Endothelial cell of umbilical vein (primary cell): ENCODE measurements at regions of chr5 and their contacts with region 1.

Region 1: GRCh38 chr5:129767906-129768380 is 20.0 kb downstream of the MINAR2 start:
- DNase-seq: peak; percentile 87
- H3K4me3 ChIP-seq: no peak overlapping the region
- H3K27ac ChIP-seq: no peak overlapping the region
- H3K4me1 ChIP-seq: no peaks in the 10 kb centered on the region
- H3K27me3 ChIP-seq: peaks cover 1 to 5% of the 10 kb centered on the region in 2 experiments
- CTCF ChIP-seq: peak; percentile 86 to 96
- POLR2A ChIP-seq: no peak

Region 2: GRCh38 chr5:129113871-129114270 is 654.1 kb before region 1 on chr5:
- CTCF ChIA-PET with region 1: interaction called, 4 read pairs
- POLR2A ChIA-PET with region 1: no interaction called
- dilution Hi-C with region 1: no loop called
- intact Hi-C with region 1: loop called (anchors 5 kb)
- DNase-seq: no peak
- H3K4me3 ChIP-seq: no peak overlapping the region
- H3K27ac ChIP-seq: no peak overlapping the region
- H3K4me1 ChIP-seq: no peaks in the 10 kb centered on the region
- H3K27me3 ChIP-seq: no peaks in the 10 kb centered on the region
- CTCF ChIP-seq: no peak
- POLR2A ChIP-seq: no peak

Region 3: DNA sequence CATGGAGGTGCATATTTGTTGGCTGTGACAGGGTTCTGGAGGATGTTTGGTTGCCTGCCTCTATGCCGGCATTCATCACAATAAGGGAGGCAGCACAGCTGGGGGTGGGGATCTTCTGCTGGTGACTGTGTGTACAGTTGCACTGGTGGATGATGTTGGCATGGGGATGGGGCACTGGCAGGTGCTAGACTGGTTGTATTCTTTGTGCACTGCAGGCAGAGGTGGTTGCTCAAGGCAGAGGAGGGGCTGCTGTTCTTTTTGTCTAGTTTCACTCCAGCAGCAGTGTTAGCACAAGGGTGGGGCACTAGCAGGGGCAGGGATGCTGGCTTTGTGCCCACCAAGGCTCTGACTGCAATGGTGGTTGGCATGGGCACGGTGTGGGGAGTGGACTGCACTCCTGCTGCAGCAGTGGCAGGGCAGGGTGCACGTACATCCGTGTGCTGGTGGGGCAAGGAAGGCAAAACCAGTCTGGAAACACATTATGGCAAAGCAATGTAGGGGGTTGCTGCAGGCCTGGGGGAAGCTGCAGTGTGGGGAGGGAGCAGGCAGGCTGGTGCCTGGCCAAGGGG is 604.0 kb before region 1 on chr5:
- CTCF ChIA-PET with region 1: no interaction called
- POLR2A ChIA-PET with region 1: no interaction called
- dilution Hi-C with region 1: no loop called
- intact Hi-C with region 1: no loop called
- DNase-seq: no peak
- H3K4me3 ChIP-seq: no peak overlapping the region
- H3K27ac ChIP-seq: no peak overlapping the region
- H3K4me1 ChIP-seq: no peaks in the 10 kb centered on the region
- H3K27me3 ChIP-seq: no peaks in the 10 kb centered on the region
- CTCF ChIP-seq: no peak
- POLR2A ChIP-seq: no peak

Region 4: GRCh38 chr5:129400322-129400983 is 367.5 kb before region 1 on chr5:
- CTCF ChIA-PET with region 1: interaction called, 24 read pairs
- POLR2A ChIA-PET with region 1: no interaction called
- dilution Hi-C with region 1: no loop called
- intact Hi-C with region 1: loop called (anchors 1 kb)
- DNase-seq: peak; percentile 4
- H3K4me3 ChIP-seq: no peak overlapping the region
- H3K27ac ChIP-seq: no peak overlapping the region
- H3K4me1 ChIP-seq: no peaks in the 10 kb centered on the region
- H3K27me3 ChIP-seq: peaks cover 0 to 2% of the 10 kb centered on the region in 2 experiments
- CTCF ChIP-seq: no peak
- POLR2A ChIP-seq: no peak

Region 5: GRCh38 chr5:129664337-129664937 is 103.5 kb before region 1 on chr5:
- CTCF ChIA-PET with region 1: interaction called, 88 read pairs
- POLR2A ChIA-PET with region 1: no interaction called
- dilution Hi-C with region 1: no loop called
- intact Hi-C with region 1: loop called (anchors 1 kb)
- DNase-seq: peak; percentile 80
- H3K4me3 ChIP-seq: no peak overlapping the region
- H3K27ac ChIP-seq: no peak overlapping the region
- H3K4me1 ChIP-seq: no peaks in the 10 kb centered on the region
- H3K27me3 ChIP-seq: no peaks in the 10 kb centered on the region
- CTCF ChIP-seq: peak; percentile 73 to 74
- POLR2A ChIP-seq: no peak

Region 6: GRCh38 chr5:130141659-130142320 is 373.8 kb after region 1 on chr5:
- CTCF ChIA-PET with region 1: interaction called, 53 read pairs
- POLR2A ChIA-PET with region 1: no interaction called
- dilution Hi-C with region 1: no loop called
- intact Hi-C with region 1: loop called (anchors 1 kb)
- DNase-seq: peak; percentile 57
- H3K4me3 ChIP-seq: no peak overlapping the region
- H3K27ac ChIP-seq: no peak overlapping the region
- H3K4me1 ChIP-seq: no peaks in the 10 kb centered on the region
- H3K27me3 ChIP-seq: no peaks in the 10 kb centered on the region
- CTCF ChIP-seq: peak; percentile 57 to 75
- POLR2A ChIP-seq: no peak